ENCODE measurements at regions of chr20 and their contacts with region 1.

Region 1: GRCh38 chr20:49484180-49485140 is 2.0 kb upstream of the KCNB1 start:
- DNase-seq: peak; percentile 81
- H3K4me3 ChIP-seq: peak overlapping the region; percentile 35 to 39
- H3K27ac ChIP-seq: peak overlapping the region in 1 of 2 donors; percentile 17
- H3K4me1 ChIP-seq: peaks cover 7% of the 10 kb centered on the region
- H3K27me3 ChIP-seq: no peaks in the 10 kb centered on the region
- CTCF ChIP-seq: peak; percentile 70 to 90 (median 81)
- POLR2A ChIP-seq: no peak

Region 2: GRCh38 chr20:48853591-48854443 is 630.6 kb before region 1 on chr20:
- intact Hi-C with region 1: no loop called
- DNase-seq: no peak
- H3K4me3 ChIP-seq: no peak overlapping the region
- H3K27ac ChIP-seq: no peak overlapping the region
- H3K4me1 ChIP-seq: no peaks in the 10 kb centered on the region
- H3K27me3 ChIP-seq: peaks cover 4% of the 10 kb centered on the region
- CTCF ChIP-seq: no peak
- POLR2A ChIP-seq: no peak

Region 3: GRCh38 chr20:49338061-49338460 is 146.4 kb before region 1 on chr20:
- intact Hi-C with region 1: loop called (anchors 1 kb)
- DNase-seq: no peak
- H3K4me3 ChIP-seq: no peak overlapping the region
- H3K27ac ChIP-seq: no peak overlapping the region
- H3K4me1 ChIP-seq: no peaks in the 10 kb centered on the region
- H3K27me3 ChIP-seq: no peaks in the 10 kb centered on the region
- CTCF ChIP-seq: no peak
- POLR2A ChIP-seq: no peak

Region 4: DNA sequence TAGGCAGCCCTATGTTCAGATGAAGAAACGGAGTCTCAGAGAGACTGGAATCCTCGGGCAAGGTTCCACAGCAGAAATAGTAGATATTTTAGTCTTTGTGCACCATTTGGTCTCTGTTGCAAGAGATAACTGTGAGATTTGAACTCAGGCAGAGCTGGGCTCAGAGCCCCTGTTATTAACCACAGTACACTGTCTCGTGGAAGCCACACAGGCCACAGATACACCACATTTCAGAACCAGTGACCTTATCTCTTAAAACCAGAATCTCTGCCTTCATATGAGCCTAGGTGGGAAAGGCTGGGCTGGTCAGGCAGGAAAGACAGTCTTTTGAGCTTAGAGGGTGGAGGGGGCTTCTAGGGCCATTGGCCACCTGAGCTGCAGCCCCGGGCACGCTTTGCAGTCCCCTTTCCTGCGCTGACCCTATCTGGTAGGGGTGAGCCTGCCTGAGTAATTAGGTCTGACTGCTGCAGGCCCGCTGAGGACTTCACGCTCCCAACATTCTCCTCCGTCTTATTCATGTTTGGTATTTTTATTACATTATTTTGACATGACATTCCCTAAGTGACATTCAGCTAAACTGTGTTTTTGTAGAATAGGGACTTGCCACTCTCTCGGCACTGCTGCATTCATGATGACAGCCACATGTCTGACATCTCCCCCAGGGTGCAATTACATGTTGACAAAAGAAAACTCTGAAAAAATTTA is 73.1 kb before region 1 on chr20:
- intact Hi-C with region 1: loop called (anchors 5 kb)
- DNase-seq: no peak
- H3K4me3 ChIP-seq: no peak overlapping the region
- H3K27ac ChIP-seq: no peak overlapping the region
- H3K4me1 ChIP-seq: no peaks in the 10 kb centered on the region
- H3K27me3 ChIP-seq: no peaks in the 10 kb centered on the region
- CTCF ChIP-seq: no peak
- POLR2A ChIP-seq: no peak

Region 5: DNA sequence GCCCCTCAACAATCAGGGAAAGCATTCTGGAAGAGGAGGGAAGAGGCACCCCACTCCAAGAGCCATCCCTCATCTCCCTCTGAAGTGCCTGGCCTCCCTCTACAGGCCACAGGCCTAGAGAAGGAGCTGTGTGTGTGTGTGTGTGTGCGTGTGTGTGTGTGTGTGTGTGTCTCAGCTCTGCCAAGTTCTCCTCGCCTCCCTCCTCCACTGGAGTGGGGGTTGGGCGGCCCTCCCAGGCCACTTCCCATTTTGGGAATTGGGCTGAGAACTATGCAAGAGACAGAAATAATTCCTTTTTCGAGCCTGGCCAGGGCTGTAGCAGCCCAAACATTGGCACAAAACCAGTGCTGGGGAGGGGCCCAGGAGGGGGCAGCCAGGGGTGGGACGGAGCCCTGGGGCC is 37.7 kb before region 1 on chr20:
- intact Hi-C with region 1: loop called (anchors 5 kb)
- DNase-seq: peak; percentile 11
- H3K4me3 ChIP-seq: no peak overlapping the region
- H3K27ac ChIP-seq: peak overlapping the region; percentile 56 to 58
- H3K4me1 ChIP-seq: no peaks in the 10 kb centered on the region
- H3K27me3 ChIP-seq: no peaks in the 10 kb centered on the region
- CTCF ChIP-seq: peak in 2 of 4 experiments; percentile 15 to 36
- POLR2A ChIP-seq: no peak

Region 6: GRCh38 chr20:49534255-49534712 is 49.8 kb after region 1 on chr20:
- intact Hi-C with region 1: loop called (anchors 5 kb)
- DNase-seq: peak; percentile 46
- H3K4me3 ChIP-seq: no peak overlapping the region
- H3K27ac ChIP-seq: no peak overlapping the region
- H3K4me1 ChIP-seq: no peaks in the 10 kb centered on the region
- H3K27me3 ChIP-seq: no peaks in the 10 kb centered on the region
- CTCF ChIP-seq: peak; percentile 37 to 86 (median 76)
- POLR2A ChIP-seq: no peak

Measured in prostate gland (tissue), 2 donors.